Left ventricle myocardium inferior (tissue), 1 donor: ENCODE measurements at regions of chr9 and their contacts with region 1.

Region 1: GRCh38 chr9:114653556-114654159 is 3.9 kb downstream of the TEX53 start:
- DNase-seq: peak; percentile 28
- H3K4me3 ChIP-seq: no peak overlapping the region
- H3K27ac ChIP-seq: no peak overlapping the region
- H3K4me1 ChIP-seq: no peaks in the 10 kb centered on the region
- H3K27me3 ChIP-seq: no peaks in the 10 kb centered on the region
- CTCF ChIP-seq: peak; percentile 91

Region 2: GRCh38 chr9:114487607-114488300 is 165.9 kb before region 1 on chr9:
- intact Hi-C with region 1: loop called (anchors 10 kb)
- DNase-seq: no peak
- H3K4me3 ChIP-seq: no peak overlapping the region
- H3K27ac ChIP-seq: no peak overlapping the region
- H3K4me1 ChIP-seq: no peaks in the 10 kb centered on the region
- H3K27me3 ChIP-seq: peaks cover 31% of the 10 kb centered on the region
- CTCF ChIP-seq: peak; percentile 71